Activated naive CD4-positive, alpha-beta T cell treated with anti-CD3 and anti-CD28 coated beads for 36 hours (primary cell): ENCODE measurements at regions of chr1 and their contacts with region 1.

Region 1: GRCh38 chr1:10494754-10495474 is 20.2 kb downstream of the PEX14 start:
- DNase-seq: peak; percentile 90
- H3K4me3 Mint-ChIP-seq: peak overlapping the region; percentile 67
- H3K27ac Mint-ChIP-seq: peak overlapping the region; percentile 87
- H3K4me1 Mint-ChIP-seq: peaks cover 38% of the 10 kb centered on the region
- H3K27me3 Mint-ChIP-seq: no peaks in the 10 kb centered on the region

Region 2: DNA sequence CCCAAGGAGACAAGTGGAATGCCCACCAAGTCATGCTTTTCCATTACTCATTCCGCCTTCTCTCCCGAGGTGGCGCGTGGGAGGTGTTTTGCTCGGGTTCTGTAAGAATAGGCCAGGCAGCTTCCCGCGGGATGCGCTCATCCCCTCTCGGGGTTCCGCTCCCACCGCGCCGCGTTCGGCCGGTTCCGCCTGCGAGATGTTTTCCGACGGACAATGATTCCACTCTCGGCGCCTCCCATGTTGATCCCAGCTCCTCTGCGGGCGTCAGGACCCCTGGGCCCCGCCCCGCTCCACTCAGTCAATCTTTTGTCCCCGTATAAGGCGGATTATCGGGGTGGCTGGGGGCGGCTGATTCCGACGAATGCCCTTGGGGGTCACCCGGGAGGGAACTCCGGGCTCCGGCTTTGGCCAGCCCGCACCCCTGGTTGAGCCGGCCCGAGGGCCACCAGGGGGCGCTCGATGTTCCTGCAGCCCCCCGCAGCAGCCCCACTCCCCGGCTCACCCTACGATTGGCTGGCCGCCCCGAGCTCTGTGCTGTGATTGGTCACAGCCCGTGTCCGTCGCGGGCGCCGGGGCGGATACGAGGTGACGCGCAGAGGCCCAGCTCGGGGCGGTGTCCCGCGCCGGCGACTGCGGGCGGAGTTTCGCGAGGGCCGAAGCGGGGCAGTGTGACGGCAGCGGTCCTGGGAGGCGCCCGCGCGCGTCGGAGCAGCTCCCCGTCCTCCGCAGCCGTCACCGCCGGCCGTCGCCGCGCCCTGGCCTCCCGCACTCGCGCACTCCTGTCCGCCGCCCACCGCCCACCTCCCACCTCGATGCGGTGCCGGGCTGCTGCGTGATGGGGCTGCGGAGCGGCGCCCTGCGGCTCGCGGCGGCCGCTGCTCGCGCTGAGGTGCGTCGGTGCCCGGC is 284.8 kb before region 1 on chr1 and contains the start of gene KIF1B:
- CTCF ChIA-PET with region 1: no interaction called
- intact Hi-C with region 1: loop called (anchors 2 kb)
- DNase-seq: peak; percentile 95
- H3K4me3 Mint-ChIP-seq: peak within 1 kb of the TSS; percentile 83
- H3K27ac Mint-ChIP-seq: peak within 1 kb of the TSS; percentile 69
- H3K4me1 Mint-ChIP-seq: peaks cover 29% of the 10 kb centered on the region
- H3K27me3 Mint-ChIP-seq: no peaks in the 10 kb centered on the region
- total RNA-seq, gene KIF1B: 6.1 to 6.2 TPM

Region 3: DNA sequence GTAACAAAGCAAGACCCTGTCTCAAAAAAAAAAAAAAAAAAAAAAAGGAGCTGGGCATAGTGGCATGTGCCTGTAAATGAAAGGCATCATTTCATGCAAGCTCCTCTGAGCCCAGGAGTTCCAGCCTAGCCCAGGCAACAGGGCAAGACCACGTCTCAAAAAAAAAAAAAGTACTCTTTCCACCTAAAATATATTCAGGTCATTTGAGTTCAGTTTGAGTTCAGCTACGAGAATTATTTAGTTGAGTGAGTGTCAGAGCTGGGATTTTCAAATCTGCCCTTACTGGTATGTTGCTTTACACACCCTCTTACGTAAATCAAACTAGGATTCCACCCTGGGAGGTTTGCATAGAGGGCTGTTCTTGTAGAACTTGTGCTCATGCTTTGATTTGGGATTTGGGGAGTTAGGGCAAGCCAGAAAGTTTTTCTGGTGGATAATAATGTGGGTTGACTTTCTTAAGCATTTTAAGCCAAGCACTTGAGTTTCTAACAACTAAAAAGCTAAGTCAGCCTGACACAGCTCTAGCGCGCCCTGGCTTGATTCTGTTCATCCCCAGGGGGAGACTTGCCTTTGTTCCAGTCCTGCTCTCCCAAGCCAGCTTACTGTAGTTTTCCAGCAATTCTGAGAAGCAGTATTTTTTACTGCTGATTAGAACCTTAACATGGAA is 107.4 kb before region 1 on chr1:
- CTCF ChIA-PET with region 1: no interaction called
- intact Hi-C with region 1: no loop called
- DNase-seq: no peak
- H3K4me3 Mint-ChIP-seq: no peak overlapping the region
- H3K27ac Mint-ChIP-seq: no peak overlapping the region
- H3K4me1 Mint-ChIP-seq: peaks cover 3% of the 10 kb centered on the region
- H3K27me3 Mint-ChIP-seq: no peaks in the 10 kb centered on the region

Region 4: DNA sequence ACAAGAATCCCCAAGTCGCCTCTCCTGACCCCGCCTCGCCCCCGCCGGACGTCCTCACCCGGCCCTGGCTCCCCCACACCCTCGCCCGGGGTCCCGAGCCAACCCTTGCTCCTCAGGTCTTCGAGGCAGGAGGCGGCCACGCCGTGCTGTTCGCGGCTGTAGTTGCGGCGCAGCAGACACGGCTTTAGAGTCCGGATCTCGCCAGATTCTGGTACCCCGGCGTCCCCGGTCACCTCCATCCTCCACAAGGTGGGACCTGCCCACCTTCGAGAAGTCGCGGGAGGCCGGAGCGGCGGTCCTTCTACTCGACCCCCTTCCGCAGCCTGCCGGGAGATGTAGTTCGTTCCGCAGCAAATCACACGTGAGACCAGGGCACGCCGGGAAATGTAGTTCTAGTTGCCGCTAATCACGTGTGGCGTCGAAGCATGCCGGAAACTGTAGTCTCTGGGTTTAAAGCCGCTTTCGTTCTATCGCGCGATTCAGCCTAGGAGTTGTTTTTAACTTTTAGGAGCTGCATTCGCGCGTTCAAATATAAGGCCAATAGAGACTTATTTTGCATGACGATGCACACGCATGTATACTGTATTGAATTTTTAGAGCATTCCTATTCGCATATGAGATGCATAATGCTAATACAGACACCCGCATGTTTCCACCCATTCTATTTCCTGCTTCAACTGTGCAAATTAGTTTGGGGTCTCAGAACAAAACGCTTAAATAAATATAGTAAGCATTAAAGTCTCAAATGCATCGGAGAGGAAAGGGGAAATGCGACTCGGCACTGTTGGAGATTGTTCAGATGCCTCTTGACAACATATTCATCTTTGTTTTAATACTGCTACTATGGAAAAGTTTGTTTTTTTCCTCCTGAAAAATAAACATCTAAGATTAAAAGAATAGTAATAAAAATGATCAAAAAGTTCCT is 22.4 kb before region 1 on chr1 and contains the start of gene DFFA:
- CTCF ChIA-PET with region 1: interaction called, 12 read pairs
- intact Hi-C with region 1: loop called (anchors 1 kb)
- DNase-seq: peak; percentile 97
- H3K4me3 Mint-ChIP-seq: peak within 1 kb of the TSS; percentile 90
- H3K27ac Mint-ChIP-seq: peak within 1 kb of the TSS; percentile 84
- H3K4me1 Mint-ChIP-seq: peaks cover 38% of the 10 kb centered on the region
- H3K27me3 Mint-ChIP-seq: no peaks in the 10 kb centered on the region
- total RNA-seq, gene DFFA: 34.2 to 36.1 TPM

Region 5: DNA sequence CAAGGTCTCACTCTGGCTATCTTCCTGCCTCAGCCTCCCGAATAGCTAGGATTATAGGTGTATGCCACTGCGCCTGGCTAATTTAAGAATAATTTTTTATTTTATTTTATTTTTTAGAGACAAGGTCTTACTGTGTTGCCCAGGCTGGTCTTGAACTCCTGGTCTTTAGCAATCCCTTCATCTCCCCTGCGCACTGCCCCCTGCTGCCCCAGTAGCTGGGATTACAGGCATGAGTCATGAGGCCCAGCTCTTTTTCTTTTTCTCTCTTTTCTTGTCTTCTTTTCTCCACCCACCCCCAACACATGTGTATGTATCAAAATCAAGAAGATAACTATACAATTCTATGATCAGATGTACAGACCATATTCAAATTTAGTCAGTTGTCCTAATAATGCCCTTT is 67.0 kb after region 1 on chr1:
- CTCF ChIA-PET with region 1: no interaction called
- intact Hi-C with region 1: loop called (anchors 5 kb)
- DNase-seq: peak; percentile 25
- H3K4me3 Mint-ChIP-seq: no peak overlapping the region
- H3K27ac Mint-ChIP-seq: no peak overlapping the region
- H3K4me1 Mint-ChIP-seq: peaks cover 5% of the 10 kb centered on the region
- H3K27me3 Mint-ChIP-seq: no peaks in the 10 kb centered on the region

Region 6: GRCh38 chr1:10867138-10867721 is 372.3 kb after region 1 on chr1:
- CTCF ChIA-PET with region 1: interaction called, 5 read pairs
- intact Hi-C with region 1: loop called (anchors 1 kb)
- DNase-seq: peak; percentile 52
- H3K4me3 Mint-ChIP-seq: no peak overlapping the region
- H3K27ac Mint-ChIP-seq: no peak overlapping the region
- H3K4me1 Mint-ChIP-seq: peaks cover 12% of the 10 kb centered on the region
- H3K27me3 Mint-ChIP-seq: peaks cover 64% of the 10 kb centered on the region

Region 7: GRCh38 chr1:10941891-10942541 is 447.1 kb after region 1 on chr1:
- CTCF ChIA-PET with region 1: interaction called, 3 read pairs
- intact Hi-C with region 1: loop called (anchors 1 kb)
- DNase-seq: peak; percentile 68
- H3K4me3 Mint-ChIP-seq: no peak overlapping the region
- H3K27ac Mint-ChIP-seq: no peak overlapping the region
- H3K4me1 Mint-ChIP-seq: peaks cover 44% of the 10 kb centered on the region
- H3K27me3 Mint-ChIP-seq: peaks cover 50% of the 10 kb centered on the region